Adrenal gland (tissue), 19 donors: ENCODE measurements at regions of chr9 and their contacts with region 1.

Region 1: DNA sequence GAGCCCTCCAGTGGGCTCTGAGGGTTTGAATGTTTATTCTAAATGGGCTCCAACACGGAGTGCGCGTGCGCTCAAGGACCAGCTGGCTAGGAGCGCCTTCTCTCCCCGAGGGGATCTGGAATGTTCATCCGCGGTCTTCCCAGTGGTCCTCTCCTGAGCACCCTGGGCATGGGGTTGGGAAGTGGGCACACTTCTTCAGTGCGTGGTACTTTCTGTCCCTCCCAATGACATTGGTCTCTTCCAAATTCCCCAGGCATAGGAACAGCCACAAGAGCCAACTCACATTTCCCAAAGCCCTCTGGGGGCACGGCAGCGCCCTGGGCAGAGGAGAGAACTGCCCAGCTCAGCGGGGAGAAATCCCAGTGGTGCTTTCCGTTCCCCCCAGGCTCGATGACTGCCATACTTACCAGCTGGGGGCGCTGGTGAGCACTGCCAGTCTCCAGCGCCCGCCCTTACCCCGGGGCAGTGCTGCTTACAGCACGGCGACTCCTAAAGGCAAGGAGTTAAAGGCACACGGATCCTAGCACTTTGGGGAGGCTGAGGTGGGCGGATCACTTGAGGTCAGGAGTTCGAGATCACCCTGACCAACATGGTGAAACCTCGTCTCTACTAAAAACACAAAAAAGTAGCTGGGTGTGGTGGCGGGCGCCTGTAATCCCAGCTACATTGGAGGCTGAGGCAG is 29.9 kb upstream of the OBP2B start:
- DNase-seq: peak; percentile 81 to 92 (median 88)
- H3K4me3 ChIP-seq: peak overlapping the region in 2 of 4 donors; percentile 18 to 47
- H3K27ac ChIP-seq: peak overlapping the region in 4 of 5 donors; percentile 22 to 85 (median 66)
- H3K4me1 ChIP-seq: peaks cover 0 to 7% of the 10 kb centered on the region in 2 donors
- H3K27me3 ChIP-seq: no peaks in the 10 kb centered on the region
- CTCF ChIP-seq: peak; percentile 76 to 96 (median 88)
- POLR2A ChIP-seq: no peak

Region 2: GRCh38 chr9:133048569-133048968 is 190.4 kb before region 1 on chr9:
- intact Hi-C with region 1: no loop called
- DNase-seq: peak in 3 of 7 donors; percentile 27 to 61 (median 42)
- H3K4me3 ChIP-seq: no peak overlapping the region
- H3K27ac ChIP-seq: no peak overlapping the region
- H3K4me1 ChIP-seq: no peaks in the 10 kb centered on the region
- H3K27me3 ChIP-seq: no peaks in the 10 kb centered on the region
- CTCF ChIP-seq: peak in 5 of 6 experiments; percentile 5 to 40 (median 25)
- POLR2A ChIP-seq: no peak

Region 3: GRCh38 chr9:133275105-133276000 is 36.4 kb after region 1 on chr9 and contains the start of gene ABO:
- intact Hi-C with region 1: loop called in 1 of 2 experiments (anchors 5 kb)
- DNase-seq: peak in 5 of 7 donors; percentile 34 to 57 (median 53)
- H3K4me3 ChIP-seq: peak within 1 kb of the TSS in 3 of 4 donors; percentile 18 to 75 (median 49)
- H3K27ac ChIP-seq: peak within 1 kb of the TSS; percentile 48 to 89 (median 79)
- H3K4me1 ChIP-seq: peaks cover 7 to 12% of the 10 kb centered on the region in 2 donors
- H3K27me3 ChIP-seq: peaks cover 5% of the 10 kb centered on the region
- CTCF ChIP-seq: peak in 3 of 6 experiments; percentile 38 to 47 (median 40)
- POLR2A ChIP-seq: peak in 1 of 2 donors; percentile 21
- total RNA-seq, gene ABO: 2.9 to 43.1 (median 18.7) TPM

Region 4: DNA sequence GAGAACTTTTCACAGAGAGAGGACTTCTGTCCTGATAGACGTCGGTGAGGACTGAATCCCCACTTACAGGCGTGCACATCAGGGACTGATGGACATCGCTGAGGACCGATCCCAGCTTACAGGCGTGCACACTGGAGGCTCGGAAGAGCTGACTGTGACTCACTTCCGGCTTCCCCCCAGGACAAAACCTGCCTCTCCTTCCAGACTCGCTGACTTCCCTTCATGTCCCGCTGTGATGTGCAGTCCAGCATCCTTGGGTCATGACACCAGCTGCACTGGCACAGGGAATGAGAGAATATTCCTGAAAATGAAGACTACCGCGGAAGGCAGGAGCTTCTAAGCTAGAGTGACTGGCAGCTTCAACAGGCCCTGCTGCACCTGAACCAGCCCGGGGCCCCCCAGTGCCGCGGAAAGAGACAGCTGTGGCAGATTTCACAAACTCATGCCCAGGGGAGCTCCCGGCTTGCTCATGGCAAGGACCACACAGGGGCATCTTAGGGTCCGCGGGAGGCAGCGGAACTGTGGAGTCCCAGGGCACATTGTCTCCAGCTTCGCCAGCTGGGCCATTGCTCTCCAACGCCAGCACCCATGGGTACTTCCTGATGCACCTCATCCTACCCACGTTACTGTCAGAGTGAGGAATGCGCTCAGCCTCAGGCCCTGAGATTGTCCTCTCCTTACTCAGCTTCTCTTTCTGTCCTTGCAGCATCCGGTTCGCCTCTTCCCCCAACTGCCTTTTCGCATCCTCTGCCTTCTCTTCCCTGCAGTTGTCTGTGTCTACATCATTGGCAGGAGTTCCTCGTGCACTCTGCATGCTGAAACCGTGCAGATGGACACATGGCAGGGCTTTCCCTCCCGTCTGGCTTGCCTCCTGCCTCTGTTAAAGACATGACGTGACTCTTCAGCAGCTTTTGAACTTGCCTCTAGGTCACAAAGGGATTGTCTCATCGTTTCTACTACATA is 67.5 kb after region 1 on chr9:
- intact Hi-C with region 1: no loop called
- DNase-seq: peak in 2 of 7 donors; percentile 3 to 35
- H3K4me3 ChIP-seq: no peak overlapping the region
- H3K27ac ChIP-seq: no peak overlapping the region
- H3K4me1 ChIP-seq: no peaks in the 10 kb centered on the region
- H3K27me3 ChIP-seq: peaks cover 6% of the 10 kb centered on the region
- CTCF ChIP-seq: no peak
- POLR2A ChIP-seq: no peak

Region 5: DNA sequence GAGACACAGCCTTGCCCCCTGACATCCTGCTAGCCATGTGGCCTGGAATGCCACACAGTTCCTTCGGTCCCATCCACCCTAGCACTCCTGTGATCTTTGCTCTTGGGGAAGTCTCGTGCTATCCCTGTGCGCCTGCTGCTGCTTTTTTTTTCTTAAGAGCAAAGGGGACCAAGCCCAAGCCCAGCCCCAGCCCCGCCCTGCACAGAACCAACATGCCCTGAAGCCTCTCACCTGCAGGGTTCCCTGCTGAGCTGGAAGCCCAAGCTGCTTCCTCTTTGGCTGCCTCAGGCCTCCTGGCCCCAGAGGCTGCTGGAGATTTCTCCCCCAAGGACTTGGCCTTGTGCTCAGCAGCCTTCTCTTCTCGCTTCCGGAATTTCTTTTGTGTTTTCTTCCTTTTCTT is 95.2 kb after region 1 on chr9:
- intact Hi-C with region 1: loop called in 1 of 2 experiments (anchors 5 kb)
- DNase-seq: peak in 5 of 7 donors; percentile 15 to 46 (median 21)
- H3K4me3 ChIP-seq: no peak overlapping the region
- H3K27ac ChIP-seq: peak overlapping the region in 1 of 5 donors; percentile 12
- H3K4me1 ChIP-seq: peaks cover 23 to 25% of the 10 kb centered on the region in 2 donors
- H3K27me3 ChIP-seq: no peaks in the 10 kb centered on the region
- CTCF ChIP-seq: no peak
- POLR2A ChIP-seq: no peak

Region 6: DNA sequence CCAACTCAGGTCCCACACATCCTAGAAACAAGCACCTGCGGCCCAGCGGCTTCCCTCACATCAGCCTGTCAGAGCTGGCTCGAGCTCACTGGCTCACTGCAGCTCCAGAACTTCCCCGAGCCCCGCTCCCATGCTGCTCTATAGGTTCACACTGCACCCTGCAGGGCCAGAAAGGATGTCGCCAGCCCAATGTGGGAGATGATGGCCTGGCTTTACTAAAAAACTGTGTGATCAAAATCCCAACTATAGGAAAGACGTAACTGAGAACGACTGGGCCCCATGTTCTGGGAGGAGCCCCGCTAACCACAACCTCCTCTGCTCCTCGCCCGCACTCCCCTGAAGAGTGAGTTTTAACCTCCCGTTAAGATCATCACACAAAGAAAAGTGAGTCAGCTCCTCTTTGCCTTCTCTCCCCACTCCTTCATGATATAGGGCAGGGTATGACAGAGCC is 132.3 kb after region 1 on chr9:
- intact Hi-C with region 1: no loop called
- DNase-seq: no peak
- H3K4me3 ChIP-seq: no peak overlapping the region
- H3K27ac ChIP-seq: peak overlapping the region in 2 of 5 donors; percentile 10 to 28
- H3K4me1 ChIP-seq: peaks cover 23 to 79% of the 10 kb centered on the region in 2 donors
- H3K27me3 ChIP-seq: no peaks in the 10 kb centered on the region
- CTCF ChIP-seq: no peak
- POLR2A ChIP-seq: no peak